Natural killer cell (primary cell): ENCODE measurements at regions of chr5 and their contacts with region 1.

Region 1: GRCh38 chr5:159331093-159331973 is 1.0 kb upstream of the IL12B start:
- DNase-seq: peak; percentile 76 to 84
- ATAC-seq: peak; percentile 86 to 98 (median 97)
- H3K4me3 ChIP-seq: peak overlapping the region; percentile 39
- H3K4me3 Mint-ChIP-seq: peak overlapping the region; percentile 70
- H3K27ac ChIP-seq: peak overlapping the region; percentile 74
- H3K27ac Mint-ChIP-seq: peak overlapping the region in 1 of 2 donors; percentile 70
- H3K4me1 ChIP-seq: peaks cover 16% of the 10 kb centered on the region
- H3K4me1 Mint-ChIP-seq: peaks cover under 1 to 23% of the 10 kb centered on the region in 2 donors
- H3K27me3 ChIP-seq: no peaks in the 10 kb centered on the region
- H3K27me3 Mint-ChIP-seq: peaks cover 5 to 6% of the 10 kb centered on the region in 2 donors
- CTCF ChIP-seq: peak; percentile 89

Region 2: DNA sequence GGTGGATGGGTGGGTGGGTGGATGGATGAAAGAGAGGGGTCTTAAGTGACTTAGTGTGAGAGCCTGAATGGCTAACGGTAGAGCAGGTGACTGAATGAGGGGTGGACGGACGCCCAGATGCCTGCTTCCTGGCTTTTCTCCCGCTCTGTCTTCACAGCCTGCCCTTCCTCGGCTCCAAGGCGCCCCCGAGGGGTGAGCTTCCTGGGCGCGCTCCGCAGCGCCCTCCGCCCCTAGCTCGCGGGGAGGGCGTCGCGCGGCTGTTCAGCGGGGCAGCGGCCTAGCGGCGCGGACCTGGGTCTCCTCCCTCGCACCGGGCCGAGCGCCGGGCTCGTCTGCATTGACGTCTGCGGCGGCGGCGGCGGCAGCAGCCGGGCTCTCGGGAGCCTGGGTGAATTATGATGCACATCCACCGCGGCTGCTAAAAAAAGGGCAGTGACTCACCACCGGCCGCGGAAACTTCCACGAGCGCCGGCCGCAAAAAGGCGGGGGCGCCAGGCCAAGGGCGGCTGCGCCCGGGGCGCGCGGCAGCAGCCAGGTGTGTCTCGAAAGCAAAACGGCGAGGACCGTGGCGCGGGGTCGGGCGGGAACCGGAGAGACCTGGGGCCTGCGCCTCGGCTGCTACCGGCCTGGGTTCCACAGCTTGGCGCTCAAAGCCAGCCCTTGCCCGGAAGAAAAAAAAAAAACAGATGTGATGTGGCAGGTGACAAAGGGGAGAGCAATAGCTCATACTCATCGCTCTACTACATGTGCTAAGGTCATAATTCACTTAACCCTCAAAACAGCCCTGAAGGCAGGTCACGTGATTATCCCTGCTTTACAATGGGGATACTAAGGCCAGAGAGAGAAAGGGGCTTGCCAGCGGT is 442.0 kb after region 1 on chr5:
- intact Hi-C with region 1: loop called (anchors 10 kb)
- DNase-seq: peak; percentile 66 to 79
- ATAC-seq: peak; percentile 83 to 95 (median 94)
- H3K4me3 ChIP-seq: peak overlapping the region; percentile 18
- H3K4me3 Mint-ChIP-seq: peak overlapping the region; percentile 68
- H3K27ac ChIP-seq: peak overlapping the region; percentile 8
- H3K27ac Mint-ChIP-seq: peak overlapping the region; percentile 57 to 60
- H3K4me1 ChIP-seq: peaks cover 10% of the 10 kb centered on the region
- H3K4me1 Mint-ChIP-seq: peaks cover 19 to 22% of the 10 kb centered on the region in 2 donors
- H3K27me3 ChIP-seq: peaks cover 9% of the 10 kb centered on the region
- H3K27me3 Mint-ChIP-seq: peaks cover 16 to 26% of the 10 kb centered on the region in 2 donors
- CTCF ChIP-seq: no peak

Region 3: GRCh38 chr5:159915904-159916840 is 584.8 kb after region 1 on chr5 and contains the start of gene ADRA1B:
- intact Hi-C with region 1: loop called (anchors 1 kb)
- DNase-seq: peak; percentile 28 to 58
- ATAC-seq: peak; percentile 48 to 86 (median 81)
- H3K4me3 ChIP-seq: no peak within 1 kb of the TSS
- H3K4me3 Mint-ChIP-seq: peak within 1 kb of the TSS; percentile 70
- H3K27ac ChIP-seq: no peak within 1 kb of the TSS
- H3K27ac Mint-ChIP-seq: no peak within 1 kb of the TSS
- H3K4me1 ChIP-seq: peaks cover 10% of the 10 kb centered on the region
- H3K4me1 Mint-ChIP-seq: peaks cover 0 to 8% of the 10 kb centered on the region in 2 donors
- H3K27me3 ChIP-seq: peaks cover 36% of the 10 kb centered on the region
- H3K27me3 Mint-ChIP-seq: peaks cover 58 to 60% of the 10 kb centered on the region in 2 donors
- CTCF ChIP-seq: peak; percentile 24
- total RNA-seq, gene ADRA1B: not detected

Region 4: DNA sequence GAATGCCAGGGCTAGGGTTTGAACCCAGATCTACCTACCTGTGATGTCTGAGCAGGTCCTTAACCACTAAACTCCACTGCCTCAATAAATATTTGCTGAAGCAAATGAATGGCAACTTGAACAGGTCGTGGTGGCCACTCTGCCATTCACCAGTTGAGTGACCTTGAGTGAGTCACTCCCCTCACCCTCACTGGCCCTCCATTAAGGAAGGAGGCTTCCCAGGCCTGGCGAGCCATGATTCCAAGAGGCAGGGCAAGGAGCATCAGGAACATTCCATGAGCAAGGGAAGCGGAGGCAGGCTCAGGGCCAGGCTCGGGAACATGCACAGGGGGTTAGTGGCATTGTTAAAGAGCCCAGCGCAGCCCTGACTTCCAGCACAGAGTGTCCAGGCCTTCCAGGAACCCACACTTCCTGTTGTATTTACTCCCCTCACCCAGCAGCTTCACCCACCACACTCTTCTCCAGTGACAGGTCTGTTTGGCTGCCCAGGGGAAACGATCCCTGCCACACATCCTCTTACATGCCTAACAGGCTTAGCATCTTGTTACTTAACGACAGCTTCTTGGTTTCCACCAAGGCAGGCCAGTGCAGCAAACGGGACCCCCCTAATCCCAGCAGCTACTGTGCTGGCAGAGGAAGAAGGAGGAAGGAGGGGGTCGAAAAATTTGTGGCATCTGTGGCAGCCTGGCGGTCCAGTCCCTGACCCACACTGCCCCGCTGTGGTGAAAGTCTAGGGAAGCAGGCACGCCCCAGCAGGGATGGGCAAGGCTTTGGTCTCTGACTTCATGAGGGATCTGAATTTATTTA is 633.9 kb after region 1 on chr5:
- intact Hi-C with region 1: loop called (anchors 5 kb)
- DNase-seq: peak in 1 of 2 donors; percentile 33
- ATAC-seq: peak; percentile 49 to 54 (median 52)
- H3K4me3 ChIP-seq: no peak overlapping the region
- H3K4me3 Mint-ChIP-seq: no peak overlapping the region
- H3K27ac ChIP-seq: no peak overlapping the region
- H3K27ac Mint-ChIP-seq: no peak overlapping the region
- H3K4me1 ChIP-seq: no peaks in the 10 kb centered on the region
- H3K4me1 Mint-ChIP-seq: peaks cover 0 to 5% of the 10 kb centered on the region in 2 donors
- H3K27me3 ChIP-seq: peaks cover 8% of the 10 kb centered on the region
- H3K27me3 Mint-ChIP-seq: peaks cover 23 to 52% of the 10 kb centered on the region in 2 donors
- CTCF ChIP-seq: peak; percentile 23